GM12878 (cell line): ENCODE measurements at regions of chr11 and their contacts with region 1.

Region 1: DNA sequence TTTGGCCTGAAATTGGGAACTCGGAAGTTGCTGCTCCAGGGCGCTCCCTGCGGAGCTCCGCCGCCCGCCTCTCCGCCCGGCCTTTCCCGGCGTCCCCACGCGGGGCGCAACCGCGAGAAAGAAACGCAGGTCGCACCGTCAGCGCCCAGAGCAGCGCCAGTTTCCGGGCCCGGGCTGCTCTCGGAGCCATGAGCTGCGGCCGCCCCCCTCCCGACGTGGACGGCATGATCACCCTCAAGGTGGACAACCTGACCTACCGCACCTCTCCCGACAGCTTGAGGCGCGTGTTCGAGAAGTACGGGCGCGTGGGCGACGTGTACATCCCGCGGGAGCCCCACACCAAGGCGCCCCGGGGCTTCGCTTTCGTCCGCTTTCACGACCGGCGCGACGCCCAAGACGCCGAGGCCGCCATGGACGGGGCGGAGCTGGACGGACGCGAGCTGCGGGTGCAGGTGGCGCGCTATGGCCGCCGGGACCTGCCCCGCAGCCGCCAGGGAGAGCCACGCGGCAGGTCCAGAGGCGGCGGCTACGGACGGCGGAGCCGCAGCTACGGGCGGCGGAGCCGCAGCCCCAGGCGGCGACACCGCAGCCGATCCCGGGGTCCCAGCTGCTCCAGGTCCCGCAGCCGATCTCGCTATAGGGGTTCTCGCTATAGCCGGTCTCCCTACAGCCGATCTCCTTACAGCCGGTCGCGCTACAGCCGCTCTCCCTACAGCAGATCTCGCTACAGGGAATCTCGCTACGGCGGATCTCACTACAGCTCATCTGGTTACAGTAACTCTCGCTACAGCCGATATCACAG is 521 bp downstream of the SRSF8 start:
- DNase-seq: no peak
- ATAC-seq: peak; percentile 80
- H3K4me3 ChIP-seq: peak overlapping the region; percentile 99
- H3K27ac ChIP-seq: peak overlapping the region; percentile 75
- H3K4me1 ChIP-seq: 0 out of 2 replicates have a peak, but pooled peaks cover 3% of the 10 kb centered on the region
- H3K27me3 ChIP-seq: no peaks in the 10 kb centered on the region
- CTCF ChIP-seq: peak; percentile 40 to 63 (median 54)
- EP300 ChIP-seq: no peak
- POLR2A ChIP-seq: peak; percentile 90
- RAD21 ChIP-seq: 0 out of 2 replicates have a peak, but pooled peaks have one; percentile 15

Region 2: GRCh38 chr11:94060405-94060804 is 1006.8 kb before region 1 on chr11:
- CTCF ChIA-PET with region 1: no interaction called
- POLR2A ChIA-PET with region 1: no interaction called
- RAD21 ChIA-PET with region 1: no interaction called
- SMC1A ChIA-PET with region 1: no interaction called
- in situ Hi-C with region 1: no loop called
- intact Hi-C with region 1: no loop called
- DNase-seq: no peak
- ATAC-seq: no peak
- H3K4me3 ChIP-seq: no peak overlapping the region
- H3K27ac ChIP-seq: no peak overlapping the region
- H3K4me1 ChIP-seq: no peaks in the 10 kb centered on the region
- H3K27me3 ChIP-seq: no peaks in the 10 kb centered on the region
- CTCF ChIP-seq: no peak
- EP300 ChIP-seq: no peak
- POLR2A ChIP-seq: no peak
- RAD21 ChIP-seq: no peak

Region 3: GRCh38 chr11:94593030-94593429 is 474.2 kb before region 1 on chr11:
- CTCF ChIA-PET with region 1: no interaction called
- POLR2A ChIA-PET with region 1: no interaction called
- RAD21 ChIA-PET with region 1: no interaction called
- SMC1A ChIA-PET with region 1: no interaction called
- in situ Hi-C with region 1: no loop called
- intact Hi-C with region 1: no loop called
- DNase-seq: no peak
- ATAC-seq: peak; percentile 82
- H3K4me3 ChIP-seq: no peak overlapping the region
- H3K27ac ChIP-seq: no peak overlapping the region
- H3K4me1 ChIP-seq: no peaks in the 10 kb centered on the region
- H3K27me3 ChIP-seq: no peaks in the 10 kb centered on the region
- CTCF ChIP-seq: no peak
- EP300 ChIP-seq: peak in 1 of 2 experiments; percentile 41; a peak in 1 of 4 replicates
- POLR2A ChIP-seq: no peak
- RAD21 ChIP-seq: no peak

Region 4: DNA sequence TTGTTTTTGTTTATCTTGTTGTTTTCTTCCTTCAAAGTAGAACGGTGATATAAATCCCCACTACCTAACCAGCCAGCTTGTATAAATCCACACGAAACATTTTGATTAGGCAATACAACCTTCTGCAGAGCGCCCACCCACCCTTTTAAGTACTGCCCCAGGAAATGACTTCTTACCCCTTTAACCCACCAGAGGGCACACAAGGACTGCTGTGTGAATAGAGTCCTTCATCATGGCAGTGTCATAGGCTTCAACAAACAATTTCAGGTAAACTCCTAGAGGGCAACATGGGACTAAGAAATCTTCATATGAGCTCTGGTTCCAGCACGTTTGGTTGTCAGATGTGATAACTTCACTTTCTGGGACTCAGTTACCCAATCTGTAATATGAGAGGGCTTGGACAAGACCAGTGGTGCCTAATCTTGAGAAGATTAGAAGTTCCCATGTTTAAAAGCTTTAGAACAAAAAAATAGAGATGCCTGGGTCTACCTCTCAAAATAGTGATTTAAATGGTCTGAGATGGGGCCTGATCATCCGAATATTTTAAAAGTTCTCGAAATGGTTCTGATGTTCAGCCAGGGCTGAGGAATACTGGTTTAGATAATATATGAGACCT is 444.0 kb before region 1 on chr11:
- CTCF ChIA-PET with region 1: interaction called, 3 read pairs
- POLR2A ChIA-PET with region 1: no interaction called
- RAD21 ChIA-PET with region 1: interaction called, 3 read pairs
- SMC1A ChIA-PET with region 1: no interaction called
- in situ Hi-C with region 1: no loop called
- intact Hi-C with region 1: loop called (anchors 10 kb)
- DNase-seq: peak; percentile 16
- ATAC-seq: peak; percentile 97
- H3K4me3 ChIP-seq: no peak overlapping the region
- H3K27ac ChIP-seq: no peak overlapping the region
- H3K4me1 ChIP-seq: no peaks in the 10 kb centered on the region
- H3K27me3 ChIP-seq: no peaks in the 10 kb centered on the region
- CTCF ChIP-seq: peak; percentile 66 to 72 (median 69)
- EP300 ChIP-seq: no peak
- POLR2A ChIP-seq: no peak
- RAD21 ChIP-seq: peak; percentile 95

Region 5: GRCh38 chr11:95055283-95055897 is 11.8 kb before region 1 on chr11:
- CTCF ChIA-PET with region 1: interaction called, 21 read pairs
- POLR2A ChIA-PET with region 1: interaction called, 14 read pairs
- RAD21 ChIA-PET with region 1: interaction called, 19 read pairs
- SMC1A ChIA-PET with region 1: interaction called, 32 read pairs
- in situ Hi-C with region 1: no loop called
- intact Hi-C with region 1: no loop called
- DNase-seq: no peak
- ATAC-seq: peak; percentile 100
- H3K4me3 ChIP-seq: no peak overlapping the region
- H3K27ac ChIP-seq: no peak overlapping the region
- H3K4me1 ChIP-seq: peaks cover 5% of the 10 kb centered on the region; the same call in 1 of the 2 replicates
- H3K27me3 ChIP-seq: no peaks in the 10 kb centered on the region; a peak in 1 of 4 replicates
- CTCF ChIP-seq: no peak
- EP300 ChIP-seq: peak in 1 of 2 experiments; percentile 8; a peak in 1 of 4 replicates
- POLR2A ChIP-seq: no peak
- RAD21 ChIP-seq: no peak

Region 6: GRCh38 chr11:95089620-95090542 is 22.6 kb after region 1 on chr11 and contains the start of gene ENDOD1:
- CTCF ChIA-PET with region 1: interaction called, 296 read pairs
- POLR2A ChIA-PET with region 1: interaction called, 139 read pairs
- RAD21 ChIA-PET with region 1: interaction called, 244 read pairs
- SMC1A ChIA-PET with region 1: interaction called, 315 read pairs
- in situ Hi-C with region 1: no loop called
- intact Hi-C with region 1: loop called (anchors 1 kb)
- DNase-seq: no peak
- ATAC-seq: peak; percentile 93
- H3K4me3 ChIP-seq: peak within 1 kb of the TSS; percentile 94
- H3K27ac ChIP-seq: peak within 1 kb of the TSS; percentile 84
- H3K4me1 ChIP-seq: peaks cover 27% of the 10 kb centered on the region
- H3K27me3 ChIP-seq: no peaks in the 10 kb centered on the region
- CTCF ChIP-seq: peak in 1 of 3 experiments; percentile 9; a peak in 1 of 6 replicates
- EP300 ChIP-seq: no peak
- POLR2A ChIP-seq: peak; percentile 93
- RAD21 ChIP-seq: no peak
- polyA plus RNA-seq, gene ENDOD1: 6.0 to 6.4 TPM

Region 7: GRCh38 chr11:95138448-95138847 is 71.2 kb after region 1 on chr11:
- CTCF ChIA-PET with region 1: interaction called, 459 read pairs
- POLR2A ChIA-PET with region 1: interaction called, 4 read pairs
- RAD21 ChIA-PET with region 1: interaction called, 110 read pairs
- SMC1A ChIA-PET with region 1: interaction called, 170 read pairs
- in situ Hi-C with region 1: no loop called
- intact Hi-C with region 1: loop called (anchors 1 kb)
- DNase-seq: no peak
- ATAC-seq: peak; percentile 97
- H3K4me3 ChIP-seq: no peak overlapping the region
- H3K27ac ChIP-seq: no peak overlapping the region
- H3K4me1 ChIP-seq: no peaks in the 10 kb centered on the region
- H3K27me3 ChIP-seq: 0 out of 4 replicates have a peak, but pooled peaks cover 0 to 2% of the 10 kb centered on the region in 2 experiments
- CTCF ChIP-seq: peak; percentile 36 to 65 (median 45); a peak in 5 of 6 replicates
- EP300 ChIP-seq: no peak
- POLR2A ChIP-seq: no peak
- RAD21 ChIP-seq: peak; percentile 84

Region 8: DNA sequence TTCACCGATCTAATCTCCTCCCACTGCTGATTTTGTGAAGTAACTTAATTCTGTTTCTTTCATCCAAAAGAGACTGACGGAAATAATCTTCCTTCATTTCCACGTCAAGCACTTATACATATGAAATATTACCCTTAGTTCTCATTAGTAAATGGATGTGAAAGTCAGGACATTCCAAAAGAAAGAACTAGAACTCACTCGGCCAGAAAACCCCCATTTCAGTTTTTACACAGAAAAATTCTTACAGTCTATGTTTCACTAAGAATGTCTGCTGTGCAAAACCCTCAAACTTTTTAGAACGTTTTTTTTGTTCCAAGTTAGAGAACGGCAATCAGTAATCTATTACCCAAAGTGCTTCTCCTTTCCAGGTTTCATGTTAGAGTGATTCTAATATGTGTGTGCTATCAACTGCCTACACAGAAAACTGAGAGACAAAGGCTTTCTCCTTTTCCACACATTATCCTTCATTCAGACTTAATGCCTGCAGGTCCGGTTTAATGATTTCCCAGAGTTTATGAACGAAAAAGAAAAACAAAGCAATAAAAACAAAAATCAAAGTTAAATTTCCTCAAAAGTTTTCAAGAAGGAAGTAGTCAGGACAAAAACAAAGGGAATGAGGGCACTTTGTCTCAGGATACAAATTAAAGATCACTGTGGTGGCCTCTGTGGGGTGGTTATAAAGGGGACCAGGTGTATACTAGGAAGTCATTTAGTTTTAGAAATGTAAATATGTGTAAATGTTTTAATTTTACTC is 175.0 kb after region 1 on chr11:
- CTCF ChIA-PET with region 1: no interaction called
- POLR2A ChIA-PET with region 1: no interaction called
- RAD21 ChIA-PET with region 1: no interaction called
- SMC1A ChIA-PET with region 1: no interaction called
- in situ Hi-C with region 1: no loop called
- intact Hi-C with region 1: no loop called
- DNase-seq: no peak
- ATAC-seq: peak; percentile 83
- H3K4me3 ChIP-seq: peak overlapping the region; percentile 11; the same call in 1 of the 2 replicates
- H3K27ac ChIP-seq: peak overlapping the region; percentile 3; the same call in 1 of the 2 replicates
- H3K4me1 ChIP-seq: peaks cover 9% of the 10 kb centered on the region; the same call in 1 of the 2 replicates
- H3K27me3 ChIP-seq: no peaks in the 10 kb centered on the region
- CTCF ChIP-seq: no peak
- EP300 ChIP-seq: peak; percentile 24 to 33; a peak in 2 of 4 replicates
- POLR2A ChIP-seq: no peak
- RAD21 ChIP-seq: no peak

Region 9: GRCh38 chr11:95790123-95790932 is 723.1 kb after region 1 on chr11 and contains the start of gene CEP57:
- CTCF ChIA-PET with region 1: interaction called, 6 read pairs
- POLR2A ChIA-PET with region 1: interaction called, 23 read pairs
- RAD21 ChIA-PET with region 1: interaction called, 6 read pairs
- SMC1A ChIA-PET with region 1: interaction called, 3 read pairs
- in situ Hi-C with region 1: no loop called
- intact Hi-C with region 1: no loop called
- DNase-seq: peak; percentile 92
- ATAC-seq: peak; percentile 73
- H3K4me3 ChIP-seq: peak within 1 kb of the TSS; percentile 87
- H3K27ac ChIP-seq: peak within 1 kb of the TSS; percentile 90
- H3K4me1 ChIP-seq: 0 out of 2 replicates have a peak, but pooled peaks cover 3% of the 10 kb centered on the region
- H3K27me3 ChIP-seq: no peaks in the 10 kb centered on the region
- CTCF ChIP-seq: no peak
- EP300 ChIP-seq: 0 out of 4 replicates have a peak, but pooled peaks of 1 of the 2 experiments have one; percentile 40
- POLR2A ChIP-seq: peak; percentile 77
- RAD21 ChIP-seq: no peak
- polyA plus RNA-seq, gene CEP57: 19.4 to 25.8 TPM